Gastrocnemius medialis (tissue), 4 donors: ENCODE measurements at regions of chr18 and their contacts with region 1.

Region 1: GRCh38 chr18:35661483-35662146 is 80.1 kb downstream of the GALNT1 start:
- DNase-seq: no peak
- ATAC-seq: no peak
- H3K4me3 ChIP-seq: no peak overlapping the region
- H3K27ac ChIP-seq: no peak overlapping the region
- H3K4me1 ChIP-seq: no peaks in the 10 kb centered on the region
- H3K27me3 ChIP-seq: no peaks in the 10 kb centered on the region
- CTCF ChIP-seq: peak in 1 of 5 experiments; percentile 14
- POLR2A ChIP-seq: no peak

Region 2: GRCh38 chr18:35407871-35408481 is 253.6 kb before region 1 on chr18:
- in situ Hi-C with region 1: loop called in 1 of 4 experiments (anchors 25 kb)
- intact Hi-C with region 1: no loop called
- DNase-seq: peak; percentile 12 to 17
- ATAC-seq: peak; percentile 85 to 96
- H3K4me3 ChIP-seq: no peak overlapping the region
- H3K27ac ChIP-seq: no peak overlapping the region
- H3K4me1 ChIP-seq: peaks cover 3% of the 10 kb centered on the region in 2 donors
- H3K27me3 ChIP-seq: no peaks in the 10 kb centered on the region
- CTCF ChIP-seq: peak; percentile 57 to 76 (median 65)
- POLR2A ChIP-seq: no peak

Region 3: GRCh38 chr18:35683021-35683420 is 21.4 kb after region 1 on chr18:
- in situ Hi-C with region 1: no loop called
- intact Hi-C with region 1: no loop called
- DNase-seq: no peak
- ATAC-seq: no peak
- H3K4me3 ChIP-seq: no peak overlapping the region
- H3K27ac ChIP-seq: no peak overlapping the region
- H3K4me1 ChIP-seq: no peaks in the 10 kb centered on the region
- H3K27me3 ChIP-seq: no peaks in the 10 kb centered on the region
- CTCF ChIP-seq: no peak
- POLR2A ChIP-seq: no peak